ENCODE measurements at regions of chr7 and their contacts with region 1.

Region 1: DNA sequence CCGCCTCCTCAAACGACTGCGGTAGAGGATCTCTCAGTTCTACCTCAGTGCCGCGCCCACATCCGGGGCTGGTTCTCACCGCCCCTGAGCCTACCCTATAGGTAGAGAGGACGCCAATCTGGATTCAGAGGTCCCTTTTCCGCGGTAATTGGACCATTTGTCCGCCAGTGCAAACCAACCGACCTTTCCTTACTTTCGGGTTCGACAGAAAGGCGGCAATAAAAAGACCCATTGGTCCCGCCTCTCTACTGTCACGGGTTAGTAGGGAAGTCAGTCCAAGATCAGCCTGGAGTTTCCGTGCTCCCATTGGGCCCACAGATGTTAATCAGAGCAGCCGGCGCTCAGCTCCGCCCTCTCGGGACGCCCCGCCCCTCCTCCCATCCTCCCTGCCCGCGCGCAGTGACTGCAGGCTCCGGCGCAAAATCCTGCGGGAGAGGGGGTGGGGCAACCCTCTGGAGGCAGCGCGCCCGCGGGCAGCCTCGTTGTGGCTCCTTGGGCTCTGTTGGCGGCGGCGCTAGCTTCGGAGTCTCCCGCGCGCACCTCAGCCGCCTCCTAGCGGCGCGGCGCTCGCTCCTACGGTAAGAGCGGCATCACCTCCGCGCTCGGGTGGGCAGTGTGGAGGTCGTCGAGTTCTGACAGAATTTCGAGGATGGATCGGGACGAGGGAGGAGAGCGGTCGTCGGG is at the starts of genes PHTF2 and TMEM60:
- DNase-seq: peak; percentile 97 to 99 (median 99)
- H3K4me3 ChIP-seq: peak within 1 kb of the TSS; percentile 71 to 100 (median 95)
- H3K27ac ChIP-seq: peak within 1 kb of the TSS; percentile 55 to 97 (median 93)
- H3K27me3 ChIP-seq: no peaks in the 10 kb centered on the region
- CTCF ChIP-seq: peak in 55 of 56 donors; percentile 31 to 79 (median 60)
- total RNA-seq, gene PHTF2: 16.2 to 37.6 (median 25.4) TPM
- total RNA-seq, gene TMEM60: 5.2 to 17.8 (median 11.1) TPM

Region 2: DNA sequence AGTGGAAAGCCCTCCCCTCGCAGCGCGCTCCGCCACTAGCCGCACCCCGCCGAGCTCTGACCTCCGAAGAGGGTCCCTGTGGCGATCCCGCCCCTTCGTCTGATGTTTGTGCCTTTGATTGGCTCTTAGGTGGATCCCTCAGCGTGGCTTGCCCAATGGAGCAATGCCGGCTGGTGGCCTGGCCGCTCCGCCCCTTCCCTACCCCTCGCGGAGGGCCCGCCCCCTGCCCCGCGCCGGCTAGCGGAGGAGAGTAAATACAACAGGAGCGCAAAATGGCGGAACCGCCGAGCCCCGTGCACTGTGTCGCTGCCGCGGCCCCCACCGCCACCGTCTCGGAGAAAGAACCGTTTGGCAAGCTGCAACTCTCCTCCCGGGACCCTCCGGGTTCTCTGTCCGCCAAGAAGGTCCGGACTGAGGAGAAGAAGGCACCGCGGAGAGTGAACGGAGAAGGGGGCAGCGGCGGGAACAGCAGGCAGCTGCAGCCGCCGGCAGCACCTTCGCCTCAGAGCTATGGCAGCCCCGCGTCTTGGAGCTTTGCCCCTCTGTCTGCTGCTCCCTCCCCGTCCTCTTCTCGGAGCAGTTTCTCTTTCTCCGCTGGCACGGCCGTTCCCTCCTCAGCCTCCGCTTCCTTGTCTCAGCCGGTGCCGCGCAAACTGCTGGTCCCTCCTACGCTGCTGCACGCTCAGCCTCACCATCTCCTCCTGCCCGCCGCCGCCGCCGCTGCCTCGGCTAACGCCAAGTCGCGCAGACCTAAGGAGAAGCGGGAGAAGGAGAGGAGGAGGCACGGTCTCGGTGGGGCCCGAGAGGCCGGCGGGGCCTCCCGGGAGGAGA is 102.1 kb before region 1 on chr7 and contains the start of gene RSBN1L:
- intact Hi-C with region 1: loop called (anchors 1 to 2 kb)
- DNase-seq: peak; percentile 95 to 100 (median 99)
- H3K4me3 ChIP-seq: peak within 1 kb of the TSS; percentile 66 to 100 (median 96)
- H3K27ac ChIP-seq: peak within 1 kb of the TSS; percentile 89 to 100 (median 99)
- H3K27me3 ChIP-seq: no peaks in the 10 kb centered on the region
- CTCF ChIP-seq: peak in 41 of 56 donors; percentile 12 to 57 (median 38)
- total RNA-seq, gene RSBN1L: 17.4 to 37.5 (median 26.3) TPM

Region 3: DNA sequence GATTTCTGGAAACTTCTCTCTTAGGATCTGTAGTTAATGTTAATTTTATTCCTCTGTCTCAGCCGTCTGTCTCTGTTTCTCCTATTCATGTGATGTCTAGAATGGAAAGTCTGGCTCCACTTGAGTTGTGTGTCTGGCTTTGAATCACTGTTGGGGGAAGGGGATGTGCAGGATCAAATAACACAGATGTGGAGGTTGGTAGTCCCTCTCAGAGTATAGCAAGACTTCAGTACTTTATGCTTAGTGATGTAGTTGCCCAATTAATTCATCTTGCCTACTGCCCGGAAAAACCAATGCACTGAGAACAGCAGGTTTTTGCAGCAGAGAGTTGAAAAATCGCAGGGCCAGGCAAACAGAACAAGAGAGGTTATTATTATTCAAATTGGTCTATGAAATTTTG is 79.3 kb after region 1 on chr7:
- intact Hi-C with region 1: no loop called
- DNase-seq: no peak
- H3K4me3 ChIP-seq: no peak overlapping the region
- H3K27ac ChIP-seq: no peak overlapping the region
- H3K27me3 ChIP-seq: no peaks in the 10 kb centered on the region
- CTCF ChIP-seq: no peak